AG04449 (cell line): ENCODE measurements at regions of chr7 and their contacts with region 1.

Region 1: DNA sequence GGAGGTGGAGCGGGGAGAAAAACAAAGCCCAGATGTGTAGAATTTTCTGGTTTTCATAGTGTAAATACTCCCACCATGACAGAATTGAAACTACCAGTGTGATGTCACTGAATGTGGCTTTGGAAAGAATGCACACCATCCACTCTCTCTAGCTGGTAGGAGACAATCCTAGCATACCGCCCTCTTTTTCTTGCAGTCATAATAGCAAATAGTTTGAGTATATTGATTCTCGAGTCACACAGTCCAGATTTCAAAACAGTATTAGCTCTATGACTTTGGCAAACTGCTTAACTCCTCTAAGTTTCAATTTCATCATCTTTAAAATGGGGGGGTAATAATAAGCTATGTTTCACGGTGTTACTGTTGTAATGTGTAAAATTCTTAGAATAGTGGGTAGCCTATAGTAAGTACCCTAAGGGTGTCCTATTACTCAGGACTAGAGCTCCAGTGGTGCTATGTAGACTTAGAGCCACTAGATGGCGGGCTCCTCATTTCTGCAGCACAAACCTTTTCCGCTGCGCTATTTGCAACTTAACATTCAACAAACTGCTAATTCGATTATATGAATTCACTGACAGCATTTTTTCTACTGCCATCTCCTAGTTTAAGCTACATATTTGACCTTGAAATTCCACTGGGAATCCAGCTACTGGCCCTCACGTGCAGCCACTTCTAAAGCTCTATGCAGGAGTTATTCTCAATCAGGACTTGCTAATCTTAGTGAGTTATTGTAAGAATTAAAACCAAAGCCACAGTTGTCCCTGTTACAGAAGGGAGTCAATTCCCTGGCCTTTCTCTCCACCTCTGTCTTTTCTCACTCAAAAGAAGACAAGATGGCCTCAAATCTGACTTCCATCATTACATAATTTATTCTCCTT is 18.7 kb downstream of the TAS2R40 start:
- DNase-seq: peak; percentile 60
- H3K4me3 ChIP-seq: peak overlapping the region; percentile 21
- CTCF ChIP-seq: peak; percentile 76

Region 2: DNA sequence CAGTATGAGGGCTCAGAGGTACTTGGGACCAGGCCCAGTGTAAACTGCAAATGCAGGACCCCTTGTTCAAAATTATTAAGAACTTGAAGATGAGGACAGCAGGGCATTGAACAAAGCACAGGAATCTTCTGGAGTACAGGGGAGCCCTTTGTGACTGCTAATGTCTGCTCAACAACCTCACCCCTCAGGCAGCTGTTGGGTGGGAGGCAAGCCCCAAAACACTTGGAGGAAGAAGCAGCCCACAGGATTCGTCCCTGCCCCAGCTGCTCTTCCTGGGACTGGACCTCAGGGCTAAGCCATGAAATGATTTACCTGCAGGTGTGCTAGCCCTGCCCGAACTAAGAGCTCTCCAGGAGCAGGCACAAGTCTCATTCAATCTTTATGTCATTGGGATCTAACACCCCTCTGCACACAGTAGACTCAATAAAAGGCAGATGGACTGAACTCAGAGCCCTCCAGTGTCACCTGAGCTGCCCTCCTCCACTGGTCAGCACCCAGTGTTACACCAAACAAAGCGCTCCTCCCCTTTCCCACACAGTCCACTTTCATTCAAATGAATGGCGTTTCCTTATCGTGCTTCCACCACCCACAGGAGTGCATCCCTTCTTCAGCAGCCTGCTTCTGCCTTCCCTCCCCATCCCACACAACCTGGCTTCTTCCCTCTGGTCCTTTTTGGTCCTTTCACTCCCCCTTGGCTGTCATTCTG is 308.0 kb before region 1 on chr7:
- CTCF ChIA-PET with region 1: no interaction called
- POLR2A ChIA-PET with region 1: no interaction called
- DNase-seq: no peak
- H3K4me3 ChIP-seq: no peak overlapping the region
- CTCF ChIP-seq: no peak

Region 3: DNA sequence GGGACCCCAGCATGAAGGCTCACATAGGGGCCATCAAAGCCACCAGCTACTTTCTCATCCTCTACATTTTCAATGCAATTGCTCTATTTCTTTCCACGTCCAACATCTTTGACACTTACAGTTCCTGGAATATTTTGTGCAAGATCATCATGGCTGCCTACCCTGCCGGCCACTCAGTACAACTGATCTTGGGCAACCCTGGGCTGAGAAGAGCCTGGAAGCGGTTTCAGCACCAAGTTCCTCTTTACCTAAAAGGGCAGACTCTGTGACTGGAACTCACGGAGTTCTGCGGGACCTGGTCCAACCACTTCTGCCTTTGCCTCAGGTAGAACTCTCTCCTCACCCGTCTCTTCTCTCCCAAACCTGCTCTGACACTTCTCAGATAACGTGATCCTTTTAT is 17.7 kb before region 1 on chr7:
- CTCF ChIA-PET with region 1: interaction called, 12 read pairs
- POLR2A ChIA-PET with region 1: no interaction called
- DNase-seq: no peak
- H3K4me3 ChIP-seq: no peak overlapping the region
- CTCF ChIP-seq: no peak

Region 4: GRCh38 chr7:143263266-143264195 is 23.0 kb after region 1 on chr7 and contains the start of gene GSTK1:
- CTCF ChIA-PET with region 1: interaction called, 51 read pairs
- POLR2A ChIA-PET with region 1: interaction called, 5 read pairs
- DNase-seq: no peak
- H3K4me3 ChIP-seq: peak within 1 kb of the TSS; percentile 93
- CTCF ChIP-seq: no peak

Region 5: GRCh38 chr7:143305423-143306070 is 65.0 kb after region 1 on chr7:
- CTCF ChIA-PET with region 1: interaction called, 16 read pairs
- POLR2A ChIA-PET with region 1: no interaction called
- DNase-seq: no peak
- H3K4me3 ChIP-seq: no peak overlapping the region
- CTCF ChIP-seq: peak; percentile 73

Region 6: DNA sequence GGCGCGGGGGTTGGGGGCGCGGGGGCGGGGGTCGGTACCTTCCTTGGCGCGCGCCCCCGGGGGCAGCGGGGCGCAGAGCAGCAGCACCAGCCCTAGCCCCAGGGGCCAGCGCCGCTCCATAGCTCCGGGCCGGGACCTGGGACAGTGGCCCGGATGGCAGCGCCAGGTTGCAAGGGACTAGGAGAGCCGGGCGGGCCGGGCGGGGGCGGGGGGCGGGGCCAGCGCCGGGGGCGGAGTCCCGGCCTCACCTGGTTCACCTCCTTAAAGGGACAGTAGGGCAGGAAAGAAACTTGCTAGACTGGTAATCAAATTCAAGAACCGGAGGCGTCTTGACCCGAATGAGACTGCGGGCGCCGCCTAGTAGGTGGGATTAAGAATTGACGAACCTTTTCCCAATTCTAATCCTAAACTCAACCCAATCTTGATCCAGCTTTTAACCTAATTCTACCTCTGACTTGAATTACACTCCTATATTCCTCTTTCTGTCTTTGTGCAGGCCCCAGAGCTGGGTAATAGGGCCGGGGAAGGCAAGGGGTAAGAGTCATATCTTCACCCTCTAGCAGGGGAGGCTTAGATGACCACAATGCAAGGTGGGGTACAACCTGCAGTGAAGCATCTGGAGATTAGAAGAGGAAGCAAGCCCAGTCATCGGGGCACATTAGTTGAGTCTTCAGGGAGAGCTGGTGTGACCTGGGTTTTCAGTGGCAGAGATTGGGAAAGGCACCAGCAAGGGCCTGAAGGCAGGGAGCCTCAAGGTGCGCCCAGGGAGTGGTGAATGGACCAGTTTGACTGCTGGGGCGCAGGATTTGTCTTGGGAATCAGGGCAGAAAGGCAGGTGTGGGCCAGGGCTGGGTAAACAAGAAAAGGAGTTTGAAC is 168.4 kb after region 1 on chr7 and contains the start of gene EPHA1:
- CTCF ChIA-PET with region 1: interaction called, 79 read pairs
- POLR2A ChIA-PET with region 1: no interaction called
- DNase-seq: no peak
- H3K4me3 ChIP-seq: no peak within 1 kb of the TSS
- CTCF ChIP-seq: peak; percentile 4

Region 7: GRCh38 chr7:143456992-143457793 is 216.7 kb after region 1 on chr7:
- CTCF ChIA-PET with region 1: interaction called, 12 read pairs
- POLR2A ChIA-PET with region 1: no interaction called
- DNase-seq: no peak
- H3K4me3 ChIP-seq: no peak overlapping the region
- CTCF ChIP-seq: no peak